ENCODE measurements at regions of chr19 and their contacts with region 1.

Region 1: GRCh38 chr19:29941828-29942403 is at the start of gene URI1:
- DNase-seq: peak; percentile 92
- ATAC-seq: peak; percentile 92
- H3K4me3 ChIP-seq: peak within 1 kb of the TSS; percentile 59 to 96 (median 78)
- H3K4me3 Mint-ChIP-seq: peak within 1 kb of the TSS; percentile 97
- H3K27ac ChIP-seq: peak within 1 kb of the TSS; percentile 46 to 67
- H3K27ac Mint-ChIP-seq: peak within 1 kb of the TSS; percentile 94
- H3K4me1 ChIP-seq: peaks cover 19 to 30% of the 10 kb centered on the region in 2 donors
- H3K4me1 Mint-ChIP-seq: peaks cover 38% of the 10 kb centered on the region
- H3K27me3 ChIP-seq: peaks cover 0 to 3% (median 0%) of the 10 kb centered on the region in 4 experiments
- H3K27me3 Mint-ChIP-seq: peaks cover 9% of the 10 kb centered on the region
- CTCF ChIP-seq: no peak
- total RNA-seq, gene URI1: 54.2 and 58.0 TPM in 2 replicates

Region 2: GRCh38 chr19:29671393-29672160 is 270.3 kb before region 1 on chr19:
- CTCF ChIA-PET with region 1: interaction called, 3 read pairs
- POLR2A ChIA-PET with region 1: no interaction called
- intact Hi-C with region 1: loop called (anchors 5 kb)
- DNase-seq: peak; percentile 82
- ATAC-seq: peak; percentile 77
- H3K4me3 ChIP-seq: peak overlapping the region in 1 of 5 experiments; percentile 1
- H3K4me3 Mint-ChIP-seq: peak overlapping the region; percentile 61
- H3K27ac ChIP-seq: peak overlapping the region; percentile 89 to 96
- H3K27ac Mint-ChIP-seq: peak overlapping the region; percentile 89
- H3K4me1 ChIP-seq: peaks cover 53 to 69% of the 10 kb centered on the region in 2 donors
- H3K4me1 Mint-ChIP-seq: peaks cover 62% of the 10 kb centered on the region
- H3K27me3 ChIP-seq: no peaks in the 10 kb centered on the region
- H3K27me3 Mint-ChIP-seq: no peaks in the 10 kb centered on the region
- CTCF ChIP-seq: peak; percentile 64

Region 3: DNA sequence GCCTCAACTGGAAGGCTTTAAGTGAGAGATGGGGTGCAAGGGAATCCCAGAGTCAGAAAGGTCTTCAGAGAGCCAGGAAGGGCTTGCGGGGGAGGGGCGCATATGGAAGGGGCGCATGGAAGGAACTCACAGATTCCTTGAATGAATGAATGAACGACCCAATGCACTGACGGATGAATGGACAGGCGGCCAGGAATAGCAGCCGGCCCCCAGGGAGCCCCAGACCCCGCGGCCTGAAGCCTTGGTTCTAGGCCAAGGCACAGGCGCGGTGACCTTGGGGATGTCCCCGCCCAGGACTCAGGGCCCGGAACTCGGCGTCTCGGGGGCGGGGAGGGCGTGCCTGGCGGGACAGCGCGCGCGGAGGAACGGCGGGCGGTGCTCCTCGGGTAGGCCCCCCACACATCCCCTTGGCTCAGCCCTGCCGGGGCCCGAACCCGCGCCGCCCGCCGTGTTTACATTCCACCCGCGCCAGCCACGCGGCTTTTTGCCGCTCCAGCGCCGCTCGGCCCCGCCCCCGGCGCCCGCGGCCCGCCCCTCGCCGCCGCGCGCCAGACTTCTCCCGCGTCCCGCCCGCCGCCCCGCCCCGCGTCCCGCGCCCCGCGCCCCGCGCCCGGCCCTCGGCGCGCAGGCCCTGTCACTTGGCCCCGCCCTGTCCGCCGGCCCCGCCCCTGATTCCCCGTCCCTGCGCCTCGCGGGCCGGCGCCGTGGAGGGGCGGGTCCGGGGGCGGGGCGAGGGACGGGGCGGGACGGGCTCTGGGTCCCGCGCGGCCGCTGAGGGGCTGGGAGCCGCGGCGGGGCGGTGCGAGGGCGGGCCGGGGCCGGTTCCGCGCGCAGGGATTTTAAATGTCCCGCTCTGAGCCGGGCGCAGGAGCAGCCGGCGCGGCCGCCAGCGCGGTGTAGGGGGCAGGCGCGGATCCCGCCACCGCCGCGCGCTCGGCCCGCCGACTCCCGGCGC is 130.5 kb before region 1 on chr19 and contains the start of gene CCNE1:
- CTCF ChIA-PET with region 1: no interaction called
- POLR2A ChIA-PET with region 1: no interaction called
- intact Hi-C with region 1: loop called (anchors 1 kb)
- DNase-seq: peak; percentile 92
- ATAC-seq: peak; percentile 94
- H3K4me3 ChIP-seq: peak within 1 kb of the TSS in 4 of 5 experiments; percentile 42 to 67 (median 58)
- H3K4me3 Mint-ChIP-seq: peak within 1 kb of the TSS; percentile 92
- H3K27ac ChIP-seq: peak within 1 kb of the TSS; percentile 41 to 76
- H3K27ac Mint-ChIP-seq: peak within 1 kb of the TSS; percentile 84
- H3K4me1 ChIP-seq: peaks cover 8 to 25% of the 10 kb centered on the region in 2 donors
- H3K4me1 Mint-ChIP-seq: peaks cover 15% of the 10 kb centered on the region
- H3K27me3 ChIP-seq: peaks cover 0 to 8% (median 0%) of the 10 kb centered on the region in 4 experiments
- H3K27me3 Mint-ChIP-seq: no peaks in the 10 kb centered on the region
- CTCF ChIP-seq: no peak
- total RNA-seq, gene CCNE1: 2.5 and 3.1 TPM in 2 replicates

Region 4: GRCh38 chr19:29953352-29954247 is 11.7 kb after region 1 on chr19:
- CTCF ChIA-PET with region 1: no interaction called
- POLR2A ChIA-PET with region 1: no interaction called
- intact Hi-C with region 1: no loop called
- DNase-seq: no peak
- ATAC-seq: no peak
- H3K4me3 ChIP-seq: no peak overlapping the region
- H3K4me3 Mint-ChIP-seq: no peak overlapping the region
- H3K27ac ChIP-seq: peak overlapping the region in 1 of 2 donors; percentile 31
- H3K27ac Mint-ChIP-seq: no peak overlapping the region
- H3K4me1 ChIP-seq: peaks cover 0 to 3% of the 10 kb centered on the region in 2 donors
- H3K4me1 Mint-ChIP-seq: peaks cover 27% of the 10 kb centered on the region
- H3K27me3 ChIP-seq: no peaks in the 10 kb centered on the region
- H3K27me3 Mint-ChIP-seq: no peaks in the 10 kb centered on the region
- CTCF ChIP-seq: no peak

Region 5: GRCh38 chr19:29966588-29967249 is 24.8 kb after region 1 on chr19:
- CTCF ChIA-PET with region 1: interaction called, 10 read pairs
- POLR2A ChIA-PET with region 1: no interaction called
- intact Hi-C with region 1: no loop called
- DNase-seq: peak; percentile 17
- ATAC-seq: no peak
- H3K4me3 ChIP-seq: no peak overlapping the region
- H3K4me3 Mint-ChIP-seq: no peak overlapping the region
- H3K27ac ChIP-seq: no peak overlapping the region
- H3K27ac Mint-ChIP-seq: no peak overlapping the region
- H3K4me1 ChIP-seq: peaks cover 22 to 36% of the 10 kb centered on the region in 2 donors
- H3K4me1 Mint-ChIP-seq: peaks cover 70% of the 10 kb centered on the region
- H3K27me3 ChIP-seq: no peaks in the 10 kb centered on the region
- H3K27me3 Mint-ChIP-seq: no peaks in the 10 kb centered on the region
- CTCF ChIP-seq: peak; percentile 38

Region 6: DNA sequence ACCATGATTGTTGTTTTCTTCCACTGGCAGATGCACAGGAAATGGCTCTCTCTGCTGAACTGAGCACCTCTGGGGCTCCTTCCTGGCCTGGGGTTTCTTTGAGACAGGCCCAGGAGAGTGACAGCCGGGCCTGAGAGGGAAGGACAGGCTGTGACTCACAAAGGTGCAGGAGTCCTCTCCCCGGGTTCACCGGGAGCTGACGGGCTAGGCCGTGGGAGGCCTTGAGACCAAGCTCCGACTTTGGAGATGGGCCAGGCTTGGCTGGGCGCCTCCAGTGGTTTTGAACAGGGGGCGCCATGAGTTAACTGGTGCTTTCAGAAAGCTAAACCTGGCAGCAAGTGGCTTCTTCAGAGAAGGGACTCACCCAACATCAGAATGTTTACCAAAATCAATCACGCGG is 143.5 kb after region 1 on chr19:
- CTCF ChIA-PET with region 1: no interaction called
- POLR2A ChIA-PET with region 1: no interaction called
- intact Hi-C with region 1: no loop called
- DNase-seq: no peak
- ATAC-seq: no peak
- H3K4me3 ChIP-seq: no peak overlapping the region
- H3K4me3 Mint-ChIP-seq: no peak overlapping the region
- H3K27ac ChIP-seq: no peak overlapping the region
- H3K27ac Mint-ChIP-seq: no peak overlapping the region
- H3K4me1 ChIP-seq: no peaks in the 10 kb centered on the region
- H3K4me1 Mint-ChIP-seq: no peaks in the 10 kb centered on the region
- H3K27me3 ChIP-seq: no peaks in the 10 kb centered on the region
- H3K27me3 Mint-ChIP-seq: peaks cover 5% of the 10 kb centered on the region
- CTCF ChIP-seq: no peak

Measured in B cell (primary cell).